MCF 10A (cell line): ENCODE measurements at regions of chr5 and their contacts with region 1.

Region 1: DNA sequence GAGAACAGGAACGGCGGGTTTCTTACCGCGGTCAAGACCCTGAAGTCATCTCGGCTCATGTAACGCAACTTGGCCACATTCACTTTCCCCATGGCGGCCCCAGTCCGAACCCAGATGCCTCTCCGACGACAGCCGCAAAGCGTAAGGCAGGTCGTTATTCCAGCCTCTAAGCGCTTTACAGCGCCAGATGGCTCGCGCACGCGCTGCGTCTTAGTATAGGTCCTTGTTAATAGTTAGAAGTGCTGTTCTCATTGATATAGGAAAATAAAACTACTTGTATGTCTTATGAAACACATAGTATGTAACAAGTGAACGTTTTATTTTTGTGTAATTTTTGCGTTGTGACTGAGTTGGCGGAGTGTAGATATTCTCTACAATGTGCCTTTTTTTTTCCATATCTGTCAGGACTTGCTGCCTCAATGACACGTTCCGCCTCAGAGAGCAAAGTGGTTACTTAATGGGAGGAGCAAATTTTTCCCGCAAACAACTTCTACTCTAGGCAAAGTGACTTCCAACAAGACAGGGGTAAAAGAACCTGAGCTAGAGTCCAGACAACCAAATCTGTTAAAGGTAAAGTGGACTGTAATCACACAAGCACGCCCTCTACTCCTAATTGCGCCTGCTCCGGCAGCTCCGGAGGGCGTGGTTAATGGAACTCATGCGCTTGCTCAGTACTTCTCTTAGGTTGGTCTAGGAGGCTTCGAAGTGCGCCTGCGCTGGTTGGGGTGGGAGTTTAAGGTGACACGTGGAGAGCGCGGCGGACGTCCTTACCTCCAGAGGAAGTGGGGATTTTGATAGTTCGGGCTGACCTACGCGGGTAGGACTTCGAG is at the start of gene RIOK2:
- DNase-seq: peak; percentile 97
- H3K4me3 Mint-ChIP-seq: peak within 1 kb of the TSS; percentile 77
- H3K27ac Mint-ChIP-seq: peak within 1 kb of the TSS; percentile 100
- H3K4me1 Mint-ChIP-seq: peaks cover 35% of the 10 kb centered on the region
- H3K27me3 Mint-ChIP-seq: no peaks in the 10 kb centered on the region
- CTCF ChIP-seq: no peak
- total RNA-seq, gene RIOK2: 45.7 and 50.9 TPM in 2 replicates

Region 2: GRCh38 chr5:98827161-98827560 is 1643.8 kb after region 1 on chr5:
- CTCF ChIA-PET with region 1: interaction called, 4 read pairs
- POLR2A ChIA-PET with region 1: no interaction called
- intact Hi-C with region 1: loop called (anchors 10 kb)
- DNase-seq: peak; percentile 60
- H3K4me3 Mint-ChIP-seq: no peak overlapping the region
- H3K27ac Mint-ChIP-seq: no peak overlapping the region
- H3K4me1 Mint-ChIP-seq: no peaks in the 10 kb centered on the region
- H3K27me3 Mint-ChIP-seq: no peaks in the 10 kb centered on the region
- CTCF ChIP-seq: peak; percentile 57